Vagina (tissue), 2 donors: ENCODE measurements at regions of chr16 and their contacts with region 1.

Region 1: GRCh38 chr16:3536271-3536731 is 35.5 kb downstream of the CLUAP1 start:
- DNase-seq: no peak
- H3K4me3 ChIP-seq: no peak overlapping the region
- H3K27ac ChIP-seq: peak overlapping the region; percentile 15
- H3K4me1 ChIP-seq: no peaks in the 10 kb centered on the region
- H3K27me3 ChIP-seq: no peaks in the 10 kb centered on the region
- CTCF ChIP-seq: no peak
- POLR2A ChIP-seq: no peak

Region 2: GRCh38 chr16:3503523-3503922 is 32.8 kb before region 1 on chr16:
- intact Hi-C with region 1: loop called (anchors 1 kb)
- DNase-seq: no peak
- H3K4me3 ChIP-seq: no peak overlapping the region
- H3K27ac ChIP-seq: no peak overlapping the region
- H3K4me1 ChIP-seq: peaks cover 26% of the 10 kb centered on the region
- H3K27me3 ChIP-seq: no peaks in the 10 kb centered on the region
- CTCF ChIP-seq: no peak
- POLR2A ChIP-seq: no peak